ENCODE measurements at regions of chr11 and their contacts with region 1.

Region 1: DNA sequence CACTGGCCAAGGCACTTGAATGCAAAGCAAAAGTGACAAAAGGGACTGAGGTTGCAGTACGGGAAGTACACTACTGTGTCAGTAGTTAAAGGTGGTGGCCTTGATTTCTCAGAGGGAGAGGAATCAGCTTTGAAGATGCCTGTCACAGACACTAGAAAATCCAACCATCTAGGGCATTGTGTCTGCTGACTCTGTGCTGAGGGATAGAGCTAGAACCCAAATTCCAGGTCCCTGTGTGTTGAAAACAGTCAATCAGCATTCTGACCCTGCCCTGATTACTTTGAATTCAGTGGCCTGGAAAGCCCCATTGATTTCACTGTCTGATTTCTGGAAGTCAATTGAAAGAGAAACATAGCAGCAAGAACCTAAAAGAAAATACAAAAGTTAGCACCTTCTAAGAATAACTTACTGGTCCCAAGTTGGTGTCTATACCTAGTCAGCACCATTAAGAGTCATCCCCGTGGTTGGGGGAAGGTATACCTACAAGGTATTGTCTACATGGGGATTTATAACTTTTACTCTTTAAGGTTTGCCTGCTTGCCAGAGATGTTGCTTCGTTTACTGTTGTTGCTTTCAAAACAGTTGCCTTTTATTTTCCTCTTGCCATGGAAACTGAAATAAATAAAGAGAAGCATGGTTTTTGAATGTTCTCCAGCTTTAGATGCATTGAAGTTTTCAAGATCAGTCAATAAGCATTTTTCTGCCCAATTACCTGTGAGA is 97.3 kb downstream of the PDHX start:
- DNase-seq: no peak
- ATAC-seq: no peak
- H3K4me3 ChIP-seq: no peak overlapping the region
- H3K27ac ChIP-seq: peak overlapping the region; percentile 100
- H3K4me1 ChIP-seq: peaks cover 89% of the 10 kb centered on the region
- H3K27me3 ChIP-seq: no peaks in the 10 kb centered on the region
- CTCF ChIP-seq: no peak

Region 2: DNA sequence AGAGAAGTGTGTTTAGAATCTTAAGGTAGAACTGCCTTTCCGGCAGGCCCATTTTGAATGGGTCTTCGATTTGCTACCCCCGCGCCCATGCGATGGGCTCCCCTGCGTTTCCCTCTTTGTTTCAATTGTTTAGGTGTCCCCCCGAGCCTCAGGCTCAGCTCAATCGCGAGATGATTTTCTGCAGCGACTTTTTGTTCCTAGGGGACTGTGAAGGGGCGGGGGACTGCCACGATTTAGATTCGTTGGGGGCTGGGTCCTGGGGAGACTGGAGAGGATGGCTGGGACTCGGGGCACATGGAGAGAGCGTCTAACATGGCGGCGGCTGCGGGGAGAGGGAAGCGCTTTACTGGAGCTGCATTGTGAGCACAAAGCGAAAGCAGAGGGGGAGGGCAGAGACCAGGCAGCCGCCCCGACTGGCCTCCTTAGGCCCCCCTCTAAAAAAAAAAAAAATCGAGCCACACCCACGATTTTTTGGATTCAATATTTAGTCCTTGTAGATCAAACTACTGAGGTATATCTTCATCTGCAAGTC is 960.4 kb before region 1 on chr11:
- CTCF ChIA-PET with region 1: no interaction called
- POLR2A ChIA-PET with region 1: no interaction called
- in situ Hi-C with region 1: no loop called
- intact Hi-C with region 1: no loop called
- DNase-seq: no peak
- ATAC-seq: peak; percentile 47
- H3K4me3 ChIP-seq: peak overlapping the region; percentile 89 to 98
- H3K27ac ChIP-seq: peak overlapping the region; percentile 98
- H3K4me1 ChIP-seq: peaks cover 44% of the 10 kb centered on the region
- H3K27me3 ChIP-seq: no peaks in the 10 kb centered on the region
- CTCF ChIP-seq: no peak

Region 3: DNA sequence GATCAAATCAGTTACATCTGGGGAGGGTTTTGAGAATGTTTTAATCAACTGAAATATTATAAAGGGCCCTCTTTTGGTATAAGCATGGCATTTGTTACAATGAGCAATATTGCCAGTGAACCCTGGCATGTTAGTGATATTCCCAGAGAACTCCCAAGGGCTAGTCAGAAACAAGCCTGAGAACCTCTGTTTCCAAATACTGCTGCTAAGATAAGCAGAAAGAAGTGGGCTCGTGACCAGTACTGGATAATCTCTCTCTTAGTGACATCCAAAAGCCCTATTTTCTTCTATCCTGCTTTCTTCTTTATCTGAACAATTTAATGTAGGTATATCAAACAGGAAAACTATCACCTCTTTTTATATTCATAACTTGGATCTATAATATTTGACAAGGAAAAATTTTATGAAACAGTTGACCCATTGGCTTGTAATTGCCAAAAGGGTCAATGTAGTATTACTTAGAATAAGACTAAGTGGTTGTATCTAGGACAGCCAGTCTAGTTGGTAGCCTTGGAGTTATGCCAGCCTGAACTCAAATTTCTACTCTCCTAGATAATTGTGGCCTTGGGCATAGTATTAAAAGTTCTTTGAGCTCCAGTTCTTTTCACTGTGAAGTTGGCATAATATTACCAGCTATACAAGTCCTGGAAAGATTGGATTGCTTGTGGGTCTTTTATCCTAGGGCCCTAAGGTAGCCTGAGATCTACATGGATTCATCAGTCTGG is 559.2 kb before region 1 on chr11:
- CTCF ChIA-PET with region 1: no interaction called
- POLR2A ChIA-PET with region 1: no interaction called
- in situ Hi-C with region 1: no loop called
- intact Hi-C with region 1: no loop called
- DNase-seq: no peak
- ATAC-seq: no peak
- H3K4me3 ChIP-seq: no peak overlapping the region
- H3K27ac ChIP-seq: no peak overlapping the region
- H3K4me1 ChIP-seq: no peaks in the 10 kb centered on the region
- H3K27me3 ChIP-seq: no peaks in the 10 kb centered on the region
- CTCF ChIP-seq: no peak

Region 4: GRCh38 chr11:34953955-34954354 is 59.7 kb before region 1 on chr11:
- CTCF ChIA-PET with region 1: no interaction called
- POLR2A ChIA-PET with region 1: interaction called, 26 read pairs
- in situ Hi-C with region 1: no loop called
- intact Hi-C with region 1: no loop called
- DNase-seq: no peak
- ATAC-seq: no peak
- H3K4me3 ChIP-seq: no peak overlapping the region
- H3K27ac ChIP-seq: peak overlapping the region; percentile 67; the same call in 1 of the 2 replicates
- H3K4me1 ChIP-seq: no peaks in the 10 kb centered on the region
- H3K27me3 ChIP-seq: no peaks in the 10 kb centered on the region
- CTCF ChIP-seq: no peak

Region 5: DNA sequence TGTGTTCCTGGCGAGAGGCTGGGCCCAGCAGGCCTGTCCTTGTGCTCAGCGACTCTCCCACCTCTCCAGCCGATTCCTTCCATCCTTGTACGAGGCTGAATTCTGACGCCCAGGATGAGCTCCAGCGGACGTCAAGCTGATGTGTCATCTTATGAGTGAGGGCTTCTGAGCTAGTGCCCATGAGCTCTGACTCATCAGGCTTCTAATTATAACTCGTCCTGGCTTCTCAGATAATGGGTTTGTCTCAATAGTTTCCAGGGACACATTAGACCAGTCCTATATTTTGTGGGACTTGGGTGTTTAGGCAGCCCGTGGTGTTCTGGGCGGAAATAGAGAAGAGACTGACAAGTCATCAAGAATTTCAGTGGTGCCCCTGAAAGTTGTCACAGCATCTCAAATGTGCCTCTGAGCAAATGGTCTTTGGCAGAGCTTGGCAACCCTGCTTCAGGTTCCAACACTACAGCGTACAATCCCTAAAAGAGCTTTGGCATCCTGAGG is 17.1 kb after region 1 on chr11:
- CTCF ChIA-PET with region 1: interaction called, 4 read pairs
- POLR2A ChIA-PET with region 1: interaction called, 11 read pairs
- in situ Hi-C with region 1: no loop called
- intact Hi-C with region 1: no loop called
- DNase-seq: peak; percentile 93
- ATAC-seq: peak; percentile 94
- H3K4me3 ChIP-seq: peak overlapping the region in 1 of 2 experiments; percentile 26; a peak in 1 of 4 replicates
- H3K27ac ChIP-seq: peak overlapping the region; percentile 92
- H3K4me1 ChIP-seq: peaks cover 36% of the 10 kb centered on the region
- H3K27me3 ChIP-seq: no peaks in the 10 kb centered on the region
- CTCF ChIP-seq: no peak

Region 6: GRCh38 chr11:35082321-35083182 is 68.9 kb after region 1 on chr11:
- CTCF ChIA-PET with region 1: no interaction called
- POLR2A ChIA-PET with region 1: interaction called, 5 read pairs
- in situ Hi-C with region 1: no loop called
- intact Hi-C with region 1: loop called (anchors 5 kb)
- DNase-seq: peak; percentile 24
- ATAC-seq: peak; percentile 83
- H3K4me3 ChIP-seq: peak overlapping the region; percentile 11 to 36; a peak in 3 of 4 replicates
- H3K27ac ChIP-seq: peak overlapping the region; percentile 98
- H3K4me1 ChIP-seq: peaks cover 61% of the 10 kb centered on the region
- H3K27me3 ChIP-seq: no peaks in the 10 kb centered on the region
- CTCF ChIP-seq: no peak

Region 7: DNA sequence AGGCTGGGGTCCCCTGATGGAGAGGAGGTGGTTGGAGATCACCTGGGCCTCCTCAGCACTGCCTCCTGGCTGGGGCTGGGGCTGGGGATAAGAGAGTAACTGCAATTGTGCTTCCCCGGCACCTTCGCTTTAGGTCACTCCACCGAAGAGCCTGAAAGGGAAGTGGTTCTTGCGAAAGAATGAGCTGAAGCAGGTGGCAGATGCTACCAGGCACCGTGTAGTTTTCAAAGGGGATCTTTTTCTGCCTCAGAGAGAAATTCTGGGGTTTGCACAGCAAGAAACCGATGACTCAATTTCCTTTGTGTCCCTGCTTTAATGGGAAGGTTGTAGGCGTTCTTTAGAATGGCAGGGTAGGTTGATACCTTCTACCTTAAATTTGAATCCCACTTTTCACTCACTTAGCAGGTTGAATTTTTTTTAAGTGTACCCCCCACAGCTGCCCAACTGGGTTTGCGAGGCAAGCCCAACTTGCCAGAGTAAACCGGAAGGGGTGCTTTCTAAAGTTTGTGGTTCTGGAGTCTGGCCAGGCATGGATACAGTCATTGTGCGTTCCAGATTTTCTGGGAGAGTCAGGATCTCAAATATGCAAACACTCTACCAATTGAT is 130.6 kb after region 1 on chr11:
- CTCF ChIA-PET with region 1: interaction called, 3 read pairs
- POLR2A ChIA-PET with region 1: interaction called, 18 read pairs
- in situ Hi-C with region 1: no loop called
- intact Hi-C with region 1: loop called (anchors 5 kb)
- DNase-seq: no peak
- ATAC-seq: no peak
- H3K4me3 ChIP-seq: peak overlapping the region; percentile 95 to 98
- H3K27ac ChIP-seq: peak overlapping the region; percentile 97
- H3K4me1 ChIP-seq: peaks cover 68% of the 10 kb centered on the region
- H3K27me3 ChIP-seq: no peaks in the 10 kb centered on the region
- CTCF ChIP-seq: 0 out of 2 replicates have a peak, but pooled peaks have one; percentile 5

Measured in Panc1 (cell line).